Activated CD4-positive, alpha-beta T cell treated with anti-CD3 and anti-CD28 coated beads, Interleukin-2, amount 10 ng/mL, durations not matched to agents 24 days and 14 days (primary cell): ENCODE measurements at regions of chr10 and their contacts with region 1.

Region 1: GRCh38 chr10:97025613-97026242 is 160.0 kb downstream of the SLIT1 start:
- DNase-seq: peak; percentile 87
- H3K4me3 Mint-ChIP-seq: no peak overlapping the region
- H3K27ac Mint-ChIP-seq: no peak overlapping the region
- H3K4me1 Mint-ChIP-seq: peaks cover 6% of the 10 kb centered on the region
- H3K27me3 Mint-ChIP-seq: peaks cover 6% of the 10 kb centered on the region

Region 2: GRCh38 chr10:96374985-96375830 is 650.5 kb before region 1 on chr10:
- intact Hi-C with region 1: loop called (anchors 10 kb)
- DNase-seq: peak; percentile 93
- H3K4me3 Mint-ChIP-seq: peak overlapping the region; percentile 83
- H3K27ac Mint-ChIP-seq: no peak overlapping the region
- H3K4me1 Mint-ChIP-seq: peaks cover 10% of the 10 kb centered on the region
- H3K27me3 Mint-ChIP-seq: peaks cover 8% of the 10 kb centered on the region

Region 3: GRCh38 chr10:96642973-96643372 is 382.8 kb before region 1 on chr10:
- intact Hi-C with region 1: loop called (anchors 5 kb)
- DNase-seq: peak; percentile 85
- H3K4me3 Mint-ChIP-seq: no peak overlapping the region
- H3K27ac Mint-ChIP-seq: no peak overlapping the region
- H3K4me1 Mint-ChIP-seq: peaks cover 21% of the 10 kb centered on the region
- H3K27me3 Mint-ChIP-seq: peaks cover 6% of the 10 kb centered on the region

Region 4: GRCh38 chr10:96765406-96766240 is 260.1 kb before region 1 on chr10:
- intact Hi-C with region 1: loop called (anchors 2 kb)
- DNase-seq: peak; percentile 89
- H3K4me3 Mint-ChIP-seq: no peak overlapping the region
- H3K27ac Mint-ChIP-seq: no peak overlapping the region
- H3K4me1 Mint-ChIP-seq: no peaks in the 10 kb centered on the region
- H3K27me3 Mint-ChIP-seq: peaks cover 11% of the 10 kb centered on the region

Region 5: DNA sequence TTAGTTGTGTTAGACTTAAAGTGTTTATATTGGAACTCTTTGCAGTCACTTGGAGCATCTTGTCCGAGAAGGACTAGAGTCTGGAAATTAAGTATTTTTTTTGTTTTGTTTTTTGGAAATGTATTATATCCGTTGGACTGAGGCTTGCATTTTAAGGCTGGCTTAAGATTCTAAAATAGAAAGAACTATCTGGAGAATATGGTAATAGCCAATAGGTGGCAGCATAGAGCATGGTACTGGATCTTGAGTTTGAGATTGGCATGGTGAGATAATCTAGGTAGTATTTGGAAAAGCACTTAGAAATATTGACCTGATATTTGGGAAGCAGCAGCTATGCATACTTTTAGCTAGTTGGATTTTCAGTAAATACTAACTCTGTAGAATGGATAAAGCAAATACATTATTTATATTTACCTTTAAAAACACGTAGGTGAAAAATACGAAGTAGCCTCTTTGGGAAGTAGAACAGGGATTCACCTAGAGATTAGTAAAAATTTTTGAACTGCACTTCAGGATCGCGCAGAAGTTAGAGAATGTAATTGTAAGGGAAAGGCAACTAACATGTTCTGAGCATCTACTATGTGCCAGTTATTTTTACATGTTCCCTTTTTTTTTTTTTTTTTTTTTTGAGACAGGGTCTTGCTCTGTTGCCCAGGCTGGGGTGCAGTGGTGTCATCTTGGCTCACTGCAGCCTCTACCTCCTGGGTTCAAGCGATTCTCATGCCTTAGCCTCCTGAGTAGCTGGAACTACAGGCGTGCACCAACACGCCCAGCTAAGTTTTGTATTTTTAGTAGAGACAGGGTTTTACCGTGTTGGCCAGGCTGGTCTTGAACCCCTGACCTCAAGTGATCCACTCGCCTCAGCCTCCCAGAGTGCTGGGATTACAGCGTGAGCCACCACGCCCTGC is 115.0 kb before region 1 on chr10:
- intact Hi-C with region 1: loop called (anchors 1 kb)
- DNase-seq: peak; percentile 72
- H3K4me3 Mint-ChIP-seq: no peak overlapping the region
- H3K27ac Mint-ChIP-seq: no peak overlapping the region
- H3K4me1 Mint-ChIP-seq: peaks cover 12% of the 10 kb centered on the region
- H3K27me3 Mint-ChIP-seq: no peaks in the 10 kb centered on the region